Mammary epithelial cell (primary cell): ENCODE measurements at regions of chr12 and their contacts with region 1.

Region 1: GRCh38 chr12:26691234-26691970 is 141.6 kb downstream of the ITPR2 start:
- DNase-seq: peak; percentile 98
- H3K4me3 ChIP-seq: no peak overlapping the region
- H3K27ac ChIP-seq: peak overlapping the region; percentile 44
- H3K4me1 ChIP-seq: peaks cover 37% of the 10 kb centered on the region
- H3K27me3 ChIP-seq: no peaks in the 10 kb centered on the region
- CTCF ChIP-seq: no peak

Region 2: GRCh38 chr12:26056335-26056734 is 635.1 kb before region 1 on chr12:
- CTCF ChIA-PET with region 1: no interaction called
- dilution Hi-C with region 1: no loop called
- in situ Hi-C with region 1: no loop called
- intact Hi-C with region 1: no loop called
- DNase-seq: peak; percentile 78
- H3K4me3 ChIP-seq: no peak overlapping the region
- H3K27ac ChIP-seq: no peak overlapping the region
- H3K4me1 ChIP-seq: peaks cover 7% of the 10 kb centered on the region
- H3K27me3 ChIP-seq: no peaks in the 10 kb centered on the region
- CTCF ChIP-seq: no peak

Region 3: GRCh38 chr12:26188127-26188526 is 503.3 kb before region 1 on chr12:
- CTCF ChIA-PET with region 1: no interaction called
- dilution Hi-C with region 1: no loop called
- in situ Hi-C with region 1: no loop called
- intact Hi-C with region 1: loop called (anchors 10 kb)
- DNase-seq: peak; percentile 74
- H3K4me3 ChIP-seq: no peak overlapping the region
- H3K27ac ChIP-seq: peak overlapping the region; percentile 41
- H3K4me1 ChIP-seq: peaks cover 33% of the 10 kb centered on the region
- H3K27me3 ChIP-seq: no peaks in the 10 kb centered on the region
- CTCF ChIP-seq: no peak

Region 4: DNA sequence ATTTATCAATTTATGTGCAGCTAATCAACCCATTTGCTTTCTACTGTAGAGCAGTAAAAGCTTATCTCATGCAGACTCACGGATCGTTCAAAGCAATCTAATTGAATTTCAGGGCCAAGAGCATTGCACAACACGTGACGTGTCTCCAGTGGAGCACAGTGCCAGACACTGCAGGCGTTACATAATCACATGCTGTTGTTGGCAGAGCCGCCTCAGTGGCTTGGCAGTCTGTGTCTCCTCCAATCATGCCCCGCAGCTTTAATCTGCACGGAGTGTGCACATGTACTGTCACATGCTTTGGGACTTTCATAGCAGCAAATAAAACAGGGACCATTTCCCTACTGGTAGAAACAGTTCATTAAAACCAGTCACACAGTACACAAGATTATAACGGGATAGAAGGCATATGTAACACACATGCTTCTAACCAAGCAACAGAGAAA is 167.7 kb before region 1 on chr12:
- CTCF ChIA-PET with region 1: no interaction called
- dilution Hi-C with region 1: no loop called
- in situ Hi-C with region 1: no loop called
- intact Hi-C with region 1: no loop called
- DNase-seq: peak; percentile 92
- H3K4me3 ChIP-seq: no peak overlapping the region
- H3K27ac ChIP-seq: no peak overlapping the region
- H3K4me1 ChIP-seq: peaks cover 8% of the 10 kb centered on the region
- H3K27me3 ChIP-seq: no peaks in the 10 kb centered on the region
- CTCF ChIP-seq: no peak

Region 5: DNA sequence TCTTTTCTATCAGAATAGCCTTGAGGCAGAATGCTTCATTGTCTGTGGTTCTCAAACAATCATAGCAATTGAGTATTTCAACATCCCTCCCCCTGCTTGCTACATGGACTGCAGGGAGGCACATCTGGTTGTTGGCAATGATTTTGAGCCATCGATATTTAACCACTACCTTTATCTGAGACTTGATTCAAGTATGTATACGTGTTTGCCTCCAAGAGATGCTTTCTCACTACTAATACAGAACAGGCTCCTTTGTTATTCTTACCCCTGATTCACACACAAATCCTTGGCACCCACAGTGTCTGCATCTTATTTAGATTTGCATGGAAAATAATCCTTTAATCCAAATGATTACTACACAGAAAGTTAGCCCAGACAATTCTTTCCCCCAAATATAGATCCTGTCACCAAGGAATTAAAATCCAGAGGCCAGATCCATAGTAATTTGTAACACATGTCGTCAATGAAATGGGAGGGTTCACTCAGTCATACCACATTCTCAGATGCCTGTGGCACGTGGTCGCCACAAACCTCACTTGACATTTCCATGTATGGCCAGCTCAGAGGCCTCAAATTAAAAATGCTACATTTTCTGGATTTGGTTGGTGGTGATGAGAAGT is 57.7 kb before region 1 on chr12:
- CTCF ChIA-PET with region 1: no interaction called
- dilution Hi-C with region 1: no loop called
- in situ Hi-C with region 1: no loop called
- intact Hi-C with region 1: no loop called
- DNase-seq: peak; percentile 68
- H3K4me3 ChIP-seq: no peak overlapping the region
- H3K27ac ChIP-seq: no peak overlapping the region
- H3K4me1 ChIP-seq: peaks cover 22% of the 10 kb centered on the region
- H3K27me3 ChIP-seq: no peaks in the 10 kb centered on the region
- CTCF ChIP-seq: no peak